ENCODE measurements at regions of chr12 and their contacts with region 1.

Region 1: DNA sequence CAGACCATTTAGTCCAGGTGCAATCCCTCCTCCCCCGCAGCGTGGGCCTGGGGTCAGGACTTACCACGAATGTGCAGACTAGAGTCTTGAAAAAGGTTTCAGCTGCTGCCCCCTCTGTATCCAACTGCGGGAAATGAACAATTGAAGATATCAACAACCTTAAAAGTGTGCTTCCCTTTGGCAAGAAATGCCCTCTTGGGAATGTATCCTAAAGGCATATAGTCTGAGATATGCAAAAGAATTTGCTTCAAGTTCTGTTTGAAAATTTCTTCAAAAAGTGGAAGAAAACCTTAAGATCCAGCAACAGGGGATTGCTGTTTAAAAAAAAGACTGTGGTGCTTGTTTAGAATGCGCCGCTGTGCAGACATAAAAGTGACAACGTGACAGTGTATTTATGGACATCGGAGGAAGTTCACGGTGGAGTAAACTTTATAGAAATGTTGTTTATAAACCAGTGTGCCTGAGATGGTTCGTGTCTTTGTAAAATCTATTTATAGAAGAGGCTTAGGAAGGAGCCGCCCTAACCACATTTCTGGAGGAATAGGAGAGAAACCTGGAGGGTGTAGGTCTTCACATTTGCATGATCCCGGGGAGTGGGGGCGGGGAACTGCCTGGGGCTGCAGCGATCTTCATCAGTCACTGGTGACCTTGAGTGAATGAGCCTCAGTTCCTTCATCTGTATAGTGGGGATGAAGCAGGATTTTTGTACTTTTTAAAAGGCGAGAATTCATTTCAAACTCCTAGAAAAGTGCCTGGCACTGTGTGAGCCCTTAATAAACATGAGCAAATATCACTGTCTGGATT is 27.4 kb downstream of the ADGRD1 start:
- DNase-seq: peak; percentile 85
- H3K4me3 ChIP-seq: peak overlapping the region; percentile 55
- H3K27ac ChIP-seq: peak overlapping the region; percentile 97
- H3K4me1 ChIP-seq: peaks cover 69% of the 10 kb centered on the region
- CTCF ChIP-seq: peak; percentile 28; the same call in 1 of the 2 replicates

Region 2: GRCh38 chr12:130879212-130879686 is 101.9 kb before region 1 on chr12:
- CTCF ChIA-PET with region 1: no interaction called
- POLR2A ChIA-PET with region 1: interaction called, 5 read pairs
- intact Hi-C with region 1: loop called (anchors 2 kb)
- DNase-seq: peak; percentile 93
- H3K4me3 ChIP-seq: peak overlapping the region; percentile 61
- H3K27ac ChIP-seq: peak overlapping the region; percentile 96
- H3K4me1 ChIP-seq: peaks cover 71% of the 10 kb centered on the region
- CTCF ChIP-seq: no peak

Region 3: DNA sequence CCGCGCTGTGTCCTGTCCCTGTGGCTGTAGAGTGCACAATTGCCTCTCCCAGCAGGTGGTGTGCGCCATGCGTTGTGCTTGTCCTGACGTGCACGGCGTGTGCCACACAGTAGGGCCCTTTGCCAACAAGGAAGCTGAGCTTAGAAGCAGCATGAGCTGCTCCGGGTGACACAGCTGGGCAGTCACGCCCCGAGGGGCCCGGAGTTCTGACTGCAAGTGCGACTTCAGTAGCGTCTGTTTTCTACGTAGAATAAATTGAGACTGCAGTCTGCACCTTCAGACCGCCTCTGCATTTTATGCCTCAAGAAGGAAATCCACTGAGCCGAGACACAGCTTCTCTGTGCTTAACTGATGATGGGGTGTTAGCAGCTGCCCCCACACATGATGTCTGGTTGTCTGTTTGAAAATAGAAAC is 54.1 kb after region 1 on chr12:
- CTCF ChIA-PET with region 1: no interaction called
- POLR2A ChIA-PET with region 1: no interaction called
- intact Hi-C with region 1: loop called (anchors 1 kb)
- DNase-seq: peak; percentile 88
- H3K4me3 ChIP-seq: peak overlapping the region; percentile 63
- H3K27ac ChIP-seq: peak overlapping the region; percentile 94
- H3K4me1 ChIP-seq: peaks cover 52% of the 10 kb centered on the region
- CTCF ChIP-seq: no peak